ENCODE measurements at regions of chr3 and their contacts with region 1.

Region 1: GRCh38 chr3:184777336-184778004 is 34.5 kb upstream of the VPS8 start:
- DNase-seq: peak; percentile 87 to 89
- ATAC-seq: peak; percentile 90 to 98 (median 96)
- H3K4me3 ChIP-seq: no peak overlapping the region
- H3K27ac ChIP-seq: no peak overlapping the region
- H3K4me1 ChIP-seq: no peaks in the 10 kb centered on the region
- H3K27me3 ChIP-seq: peaks cover 0 to 16% (median 2%) of the 10 kb centered on the region in 3 donors
- CTCF ChIP-seq: peak; percentile 96

Region 2: GRCh38 chr3:184561061-184561912 is 216.2 kb before region 1 on chr3 and contains the start of gene EPHB3:
- intact Hi-C with region 1: loop called (anchors 1 kb)
- DNase-seq: peak; percentile 98 to 99
- ATAC-seq: peak; percentile 96 to 97 (median 96)
- H3K4me3 ChIP-seq: peak within 1 kb of the TSS; percentile 70
- H3K27ac ChIP-seq: no peak within 1 kb of the TSS
- H3K4me1 ChIP-seq: peaks cover 12% of the 10 kb centered on the region
- H3K27me3 ChIP-seq: peaks cover 0 to 35% (median 4%) of the 10 kb centered on the region in 3 donors
- CTCF ChIP-seq: peak; percentile 99
- total RNA-seq, gene EPHB3: 0.34 to 1.6 (median 0.92) TPM

Region 3: GRCh38 chr3:184716622-184717398 is 60.7 kb before region 1 on chr3:
- intact Hi-C with region 1: no loop called
- DNase-seq: no peak
- ATAC-seq: peak; percentile 52 to 70 (median 60)
- H3K4me3 ChIP-seq: peak overlapping the region; percentile 19
- H3K27ac ChIP-seq: peak overlapping the region; percentile 65
- H3K4me1 ChIP-seq: peaks cover 16% of the 10 kb centered on the region
- H3K27me3 ChIP-seq: no peaks in the 10 kb centered on the region
- CTCF ChIP-seq: no peak

Region 4: GRCh38 chr3:184727357-184728009 is 50.0 kb before region 1 on chr3:
- intact Hi-C with region 1: loop called in 1 of 2 experiments (anchors 5 kb)
- DNase-seq: peak in 1 of 2 donors; percentile 46
- ATAC-seq: peak; percentile 74 to 92 (median 90)
- H3K4me3 ChIP-seq: no peak overlapping the region
- H3K27ac ChIP-seq: no peak overlapping the region
- H3K4me1 ChIP-seq: no peaks in the 10 kb centered on the region
- H3K27me3 ChIP-seq: no peaks in the 10 kb centered on the region
- CTCF ChIP-seq: peak; percentile 59

Region 5: DNA sequence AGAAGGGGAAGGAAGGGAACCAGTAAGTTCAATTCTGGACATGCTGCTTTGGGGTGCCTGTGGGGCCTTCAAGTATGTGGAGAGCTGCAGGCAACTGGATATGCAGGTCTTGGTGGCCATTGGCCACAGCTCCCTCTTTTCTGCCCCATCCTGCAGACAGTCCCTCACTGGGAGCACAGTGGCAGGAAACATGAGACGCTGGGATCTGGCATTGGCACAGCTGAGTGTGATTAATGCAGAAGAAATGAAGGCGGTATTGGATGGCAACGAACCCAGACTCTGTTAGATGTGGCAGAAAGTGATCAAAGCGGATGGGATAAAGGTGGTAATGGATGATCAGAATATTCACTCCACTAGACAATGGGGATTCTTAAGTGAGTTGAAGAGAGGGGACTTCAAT is 11.3 kb after region 1 on chr3:
- intact Hi-C with region 1: no loop called
- DNase-seq: no peak
- ATAC-seq: peak; percentile 79 to 90 (median 83)
- H3K4me3 ChIP-seq: no peak overlapping the region
- H3K27ac ChIP-seq: no peak overlapping the region
- H3K4me1 ChIP-seq: peaks cover 16% of the 10 kb centered on the region
- H3K27me3 ChIP-seq: no peaks in the 10 kb centered on the region
- CTCF ChIP-seq: no peak

Measured in psoas muscle (tissue), 8 donors.